ENCODE measurements at regions of chr4 and their contacts with region 1.

Region 1: DNA sequence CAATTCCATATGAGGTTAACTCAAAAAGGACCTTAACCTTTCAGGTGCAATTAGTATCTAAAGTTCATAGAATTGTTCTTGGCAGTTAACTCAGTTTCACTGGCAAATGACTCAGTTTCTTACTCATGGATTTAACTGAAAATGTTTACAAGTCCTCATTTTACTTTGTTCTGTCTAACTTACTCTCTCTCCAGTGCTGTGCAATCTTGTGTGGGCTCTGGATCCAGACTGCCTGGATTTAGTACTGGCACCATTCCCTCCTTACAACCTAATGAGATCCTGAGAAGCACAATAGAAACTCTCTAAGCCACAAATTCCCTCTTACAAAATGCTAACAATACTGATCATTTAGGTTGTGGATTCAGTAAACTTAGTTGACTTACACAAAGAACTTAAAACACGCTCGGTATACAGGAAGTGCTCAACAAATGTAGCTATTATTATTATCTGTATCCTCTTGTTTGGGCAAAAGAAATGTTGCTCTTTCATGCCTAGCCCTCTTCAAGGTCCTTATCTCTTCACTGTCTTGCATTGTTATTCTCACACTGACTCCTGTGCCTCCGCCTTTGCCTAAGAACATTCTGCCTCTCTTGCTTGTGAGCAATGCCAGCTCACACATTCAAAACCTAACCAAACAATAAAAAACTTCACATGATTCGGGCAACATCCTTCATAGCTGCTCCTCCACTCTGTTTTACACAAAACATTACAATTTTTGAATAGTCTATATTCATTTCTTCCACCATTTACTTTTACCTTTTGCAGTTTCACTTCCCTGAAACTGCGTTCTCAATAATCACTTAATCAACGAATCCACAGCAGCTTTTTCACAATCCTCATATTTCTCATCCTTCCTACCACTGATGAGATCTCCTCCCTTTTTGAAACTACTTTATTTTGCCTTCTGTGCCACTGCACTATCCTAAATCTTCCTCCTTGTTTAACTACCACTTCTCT is 91.8 kb downstream of the PDE5A start:
- DNase-seq: no peak

Region 2: DNA sequence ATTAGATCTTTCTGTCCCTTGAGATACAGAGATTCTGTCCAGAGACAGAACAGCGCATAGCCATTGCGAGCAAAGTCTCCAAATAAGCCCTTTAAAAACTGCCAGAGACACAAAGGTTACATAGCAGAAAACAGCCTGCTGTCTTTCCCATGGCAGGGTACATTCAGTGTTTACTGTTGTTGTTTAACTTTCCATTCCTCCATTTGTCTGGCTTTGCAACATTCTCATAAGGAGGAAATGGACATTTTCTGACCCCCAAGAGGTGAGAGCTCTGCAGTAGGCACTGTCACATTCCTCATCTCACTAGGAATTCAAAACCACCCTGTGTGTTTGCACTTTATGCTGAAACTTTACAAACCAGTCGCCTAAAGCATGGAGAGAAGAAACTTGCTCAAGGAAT is 43.5 kb after region 1 on chr4:
- intact Hi-C with region 1: loop called in 1 of 2 experiments (anchors 1 kb)
- DNase-seq: no peak

Measured in posterior vena cava (tissue), 2 donors.